CD4-positive, alpha-beta T cell (primary cell): ENCODE measurements at regions of chr5 and their contacts with region 1.

Region 1: GRCh38 chr5:776792-777711 is 7.5 kb downstream of the ZDHHC11B start:
- DNase-seq: no peak
- ATAC-seq: no peak
- H3K4me3 ChIP-seq: no peak overlapping the region
- H3K4me3 Mint-ChIP-seq: no peak overlapping the region
- H3K27ac ChIP-seq: no peak overlapping the region
- H3K27ac Mint-ChIP-seq: no peak overlapping the region
- H3K4me1 ChIP-seq: no peaks in the 10 kb centered on the region
- H3K4me1 Mint-ChIP-seq: no peaks in the 10 kb centered on the region
- H3K27me3 ChIP-seq: no peaks in the 10 kb centered on the region
- H3K27me3 Mint-ChIP-seq: peaks cover 7% of the 10 kb centered on the region
- CTCF ChIP-seq: no peak

Region 2: DNA sequence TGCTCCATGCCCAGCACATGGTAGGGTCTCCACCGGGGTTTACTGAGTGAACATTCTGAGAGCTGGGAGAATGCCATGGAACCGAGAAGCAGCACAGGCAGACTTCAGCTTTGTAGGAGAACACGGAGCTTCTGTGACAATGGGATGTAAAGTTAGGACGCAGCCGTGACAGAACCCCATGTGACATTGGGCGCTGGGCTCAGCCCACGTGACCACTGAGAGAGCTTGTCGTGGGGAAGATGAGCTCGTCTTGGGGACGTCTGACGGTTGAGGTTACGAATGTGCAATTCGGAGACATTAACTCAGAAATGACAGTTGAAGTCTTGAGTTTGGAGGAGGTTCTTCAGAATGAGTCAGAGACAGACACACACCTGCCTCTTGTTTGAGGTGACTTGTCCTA is 545.4 kb before region 1 on chr5:
- CTCF ChIA-PET with region 1: no interaction called
- POLR2A ChIA-PET with region 1: no interaction called
- intact Hi-C with region 1: no loop called
- DNase-seq: no peak
- ATAC-seq: no peak
- H3K4me3 ChIP-seq: no peak overlapping the region
- H3K4me3 Mint-ChIP-seq: no peak overlapping the region
- H3K27ac ChIP-seq: no peak overlapping the region
- H3K27ac Mint-ChIP-seq: no peak overlapping the region
- H3K4me1 ChIP-seq: no peaks in the 10 kb centered on the region
- H3K4me1 Mint-ChIP-seq: no peaks in the 10 kb centered on the region
- H3K27me3 ChIP-seq: no peaks in the 10 kb centered on the region
- H3K27me3 Mint-ChIP-seq: no peaks in the 10 kb centered on the region
- CTCF ChIP-seq: no peak

Region 3: GRCh38 chr5:643351-644271 is 133.4 kb before region 1 on chr5:
- CTCF ChIA-PET with region 1: no interaction called
- POLR2A ChIA-PET with region 1: no interaction called
- intact Hi-C with region 1: no loop called
- DNase-seq: no peak
- ATAC-seq: no peak
- H3K4me3 ChIP-seq: no peak overlapping the region
- H3K4me3 Mint-ChIP-seq: no peak overlapping the region
- H3K27ac ChIP-seq: no peak overlapping the region
- H3K27ac Mint-ChIP-seq: no peak overlapping the region
- H3K4me1 ChIP-seq: no peaks in the 10 kb centered on the region
- H3K4me1 Mint-ChIP-seq: no peaks in the 10 kb centered on the region
- H3K27me3 ChIP-seq: no peaks in the 10 kb centered on the region
- H3K27me3 Mint-ChIP-seq: no peaks in the 10 kb centered on the region
- CTCF ChIP-seq: no peak

Region 4: DNA sequence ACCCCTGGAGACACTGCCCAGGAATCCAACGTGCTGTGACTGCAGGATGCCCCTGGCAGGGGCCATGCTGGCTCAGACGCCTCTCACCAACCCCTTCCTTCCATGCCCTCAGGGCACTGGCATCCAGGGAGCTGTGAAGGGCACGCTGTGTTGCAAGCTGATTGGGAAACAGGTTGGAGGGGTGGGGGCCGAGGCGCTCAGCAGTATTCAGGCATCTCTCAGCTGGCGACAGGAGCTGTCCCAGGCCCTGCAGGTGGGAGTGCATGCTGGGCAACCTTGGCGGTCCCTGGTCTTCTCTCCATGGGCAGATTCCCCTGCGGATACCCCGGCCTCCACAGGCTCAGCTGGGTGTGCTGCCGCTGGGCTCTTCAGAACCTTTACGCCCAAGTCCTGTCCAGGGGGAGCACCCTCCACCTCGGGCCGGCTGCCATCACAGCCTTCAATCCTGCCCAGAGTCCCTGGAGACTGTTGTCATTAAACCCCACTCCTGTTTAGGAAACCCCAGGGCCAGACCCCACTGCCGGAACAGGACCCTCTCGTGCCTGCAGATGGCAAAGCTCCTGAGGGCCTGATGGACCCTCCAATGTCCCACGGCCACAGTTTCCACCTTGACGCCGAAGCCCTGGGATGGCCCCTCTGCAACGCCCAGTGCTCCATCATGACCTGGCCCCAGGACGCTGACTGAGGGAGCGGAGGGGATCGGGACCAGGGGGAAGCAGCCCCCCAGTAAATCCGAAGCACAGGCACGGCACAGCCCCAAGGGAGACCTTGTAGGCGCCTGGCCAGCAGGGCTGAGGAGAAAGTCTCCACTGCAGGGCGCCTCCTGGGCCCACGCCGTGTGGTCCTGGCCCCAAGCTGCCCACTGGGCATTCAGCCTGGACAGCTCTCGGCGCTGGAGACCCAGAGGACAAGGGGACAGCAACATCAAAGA is 93.2 kb before region 1 on chr5:
- CTCF ChIA-PET with region 1: no interaction called
- POLR2A ChIA-PET with region 1: no interaction called
- intact Hi-C with region 1: loop called (anchors 2 to 5 kb)
- DNase-seq: peak in 2 of 14 experiments; percentile 18 to 24
- ATAC-seq: no peak
- H3K4me3 ChIP-seq: no peak overlapping the region
- H3K4me3 Mint-ChIP-seq: no peak overlapping the region
- H3K27ac ChIP-seq: no peak overlapping the region
- H3K27ac Mint-ChIP-seq: no peak overlapping the region
- H3K4me1 ChIP-seq: no peaks in the 10 kb centered on the region
- H3K4me1 Mint-ChIP-seq: no peaks in the 10 kb centered on the region
- H3K27me3 ChIP-seq: no peaks in the 10 kb centered on the region
- H3K27me3 Mint-ChIP-seq: peaks cover 5% of the 10 kb centered on the region
- CTCF ChIP-seq: no peak

Region 5: GRCh38 chr5:892394-893136 is 115.5 kb after region 1 on chr5 and contains the starts of genes BRD9 and TRIP13:
- CTCF ChIA-PET with region 1: no interaction called
- POLR2A ChIA-PET with region 1: no interaction called
- intact Hi-C with region 1: loop called in 1 of 2 experiments (anchors 5 kb)
- DNase-seq: peak; percentile 69 to 93 (median 80)
- ATAC-seq: peak; percentile 95
- H3K4me3 ChIP-seq: peak within 1 kb of the TSS; percentile 95
- H3K4me3 Mint-ChIP-seq: peak within 1 kb of the TSS; percentile 92
- H3K27ac ChIP-seq: peak within 1 kb of the TSS; percentile 48 to 67
- H3K27ac Mint-ChIP-seq: peak within 1 kb of the TSS; percentile 90
- H3K4me1 ChIP-seq: peaks cover 30% of the 10 kb centered on the region
- H3K4me1 Mint-ChIP-seq: peaks cover 25% of the 10 kb centered on the region
- H3K27me3 ChIP-seq: no peaks in the 10 kb centered on the region
- H3K27me3 Mint-ChIP-seq: no peaks in the 10 kb centered on the region
- CTCF ChIP-seq: no peak
- total RNA-seq, gene BRD9: 109 TPM
- total RNA-seq, gene TRIP13: 0.47 to 0.66 TPM

Region 6: GRCh38 chr5:932628-933250 is 155.7 kb after region 1 on chr5:
- CTCF ChIA-PET with region 1: no interaction called
- POLR2A ChIA-PET with region 1: no interaction called
- intact Hi-C with region 1: no loop called
- DNase-seq: no peak
- ATAC-seq: no peak
- H3K4me3 ChIP-seq: no peak overlapping the region
- H3K4me3 Mint-ChIP-seq: no peak overlapping the region
- H3K27ac ChIP-seq: no peak overlapping the region
- H3K27ac Mint-ChIP-seq: no peak overlapping the region
- H3K4me1 ChIP-seq: no peaks in the 10 kb centered on the region
- H3K4me1 Mint-ChIP-seq: no peaks in the 10 kb centered on the region
- H3K27me3 ChIP-seq: peaks cover under 1 to 2% of the 10 kb centered on the region in 2 experiments
- H3K27me3 Mint-ChIP-seq: peaks cover 23% of the 10 kb centered on the region
- CTCF ChIP-seq: no peak

Region 7: DNA sequence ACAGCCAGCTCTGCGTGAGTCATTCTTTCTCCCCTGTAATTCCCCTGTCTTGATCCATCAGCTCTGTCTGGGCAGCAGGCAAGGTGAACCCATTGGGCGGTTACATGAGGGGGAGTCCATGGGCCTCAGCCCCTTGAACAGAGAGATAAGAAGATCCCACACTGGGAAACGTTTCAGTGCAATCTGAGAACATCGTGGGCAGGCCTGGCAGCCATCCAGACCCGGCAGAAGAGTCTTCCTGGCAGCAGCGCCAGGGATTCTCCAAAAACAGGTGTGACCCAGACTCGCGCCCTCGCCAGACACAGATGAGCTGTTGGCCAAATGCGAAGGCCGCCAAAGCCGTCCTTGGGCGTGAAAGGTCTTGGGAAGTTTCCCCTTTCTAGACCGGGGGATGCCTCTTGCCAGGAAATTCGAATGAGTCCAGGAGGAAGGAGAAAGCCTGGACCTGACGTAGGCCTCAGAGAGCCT is 341.2 kb after region 1 on chr5:
- CTCF ChIA-PET with region 1: no interaction called
- POLR2A ChIA-PET with region 1: no interaction called
- intact Hi-C with region 1: no loop called
- DNase-seq: no peak
- ATAC-seq: no peak
- H3K4me3 ChIP-seq: no peak overlapping the region
- H3K4me3 Mint-ChIP-seq: no peak overlapping the region
- H3K27ac ChIP-seq: no peak overlapping the region
- H3K27ac Mint-ChIP-seq: no peak overlapping the region
- H3K4me1 ChIP-seq: peaks cover 5% of the 10 kb centered on the region
- H3K4me1 Mint-ChIP-seq: no peaks in the 10 kb centered on the region
- H3K27me3 ChIP-seq: no peaks in the 10 kb centered on the region
- H3K27me3 Mint-ChIP-seq: no peaks in the 10 kb centered on the region
- CTCF ChIP-seq: no peak